Calu3 (cell line): ENCODE measurements at regions of chr6 and their contacts with region 1.

Region 1: GRCh38 chr6:20688710-20689500 is 154.6 kb downstream of the CDKAL1 start:
- DNase-seq: peak; percentile 37
- H3K4me3 Mint-ChIP-seq: peak overlapping the region; percentile 4
- H3K27ac Mint-ChIP-seq: peak overlapping the region; percentile 9
- H3K4me1 Mint-ChIP-seq: peaks cover 47% of the 10 kb centered on the region
- H3K27me3 Mint-ChIP-seq: no peaks in the 10 kb centered on the region
- CTCF ChIP-seq: no peak

Region 2: DNA sequence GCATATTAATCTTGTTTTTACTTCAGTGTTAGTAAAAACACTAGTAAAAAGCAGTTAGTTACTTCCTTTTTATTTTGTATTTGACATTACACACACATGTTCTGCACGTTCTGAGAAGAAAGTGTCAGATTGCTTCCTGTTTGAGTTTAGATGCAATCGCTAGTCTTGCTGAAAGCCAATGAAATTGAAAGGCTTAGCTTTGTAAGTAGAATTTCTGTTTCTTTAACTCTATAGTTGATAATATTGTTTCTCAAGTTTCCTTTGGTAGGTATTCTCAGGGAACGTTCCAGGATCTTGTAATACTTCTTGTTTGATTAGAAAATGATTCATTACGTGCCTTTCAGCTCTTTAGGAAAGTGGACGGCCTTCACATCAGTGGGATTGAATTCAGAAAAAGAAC is 99.6 kb before region 1 on chr6:
- CTCF ChIA-PET with region 1: interaction called, 3 read pairs
- intact Hi-C with region 1: loop called (anchors 5 kb)
- DNase-seq: peak; percentile 8
- H3K4me3 Mint-ChIP-seq: no peak overlapping the region
- H3K27ac Mint-ChIP-seq: peak overlapping the region; percentile 23
- H3K4me1 Mint-ChIP-seq: no peaks in the 10 kb centered on the region
- H3K27me3 Mint-ChIP-seq: no peaks in the 10 kb centered on the region
- CTCF ChIP-seq: no peak

Region 3: GRCh38 chr6:20710341-20710740 is 21.4 kb after region 1 on chr6:
- CTCF ChIA-PET with region 1: interaction called, 4 read pairs
- intact Hi-C with region 1: loop called (anchors 1 kb)
- DNase-seq: no peak
- H3K4me3 Mint-ChIP-seq: no peak overlapping the region
- H3K27ac Mint-ChIP-seq: peak overlapping the region; percentile 38
- H3K4me1 Mint-ChIP-seq: peaks cover 50% of the 10 kb centered on the region
- H3K27me3 Mint-ChIP-seq: no peaks in the 10 kb centered on the region
- CTCF ChIP-seq: no peak